HepG2 (cell line): ENCODE measurements at regions of chr3 and their contacts with region 1.

Region 1: DNA sequence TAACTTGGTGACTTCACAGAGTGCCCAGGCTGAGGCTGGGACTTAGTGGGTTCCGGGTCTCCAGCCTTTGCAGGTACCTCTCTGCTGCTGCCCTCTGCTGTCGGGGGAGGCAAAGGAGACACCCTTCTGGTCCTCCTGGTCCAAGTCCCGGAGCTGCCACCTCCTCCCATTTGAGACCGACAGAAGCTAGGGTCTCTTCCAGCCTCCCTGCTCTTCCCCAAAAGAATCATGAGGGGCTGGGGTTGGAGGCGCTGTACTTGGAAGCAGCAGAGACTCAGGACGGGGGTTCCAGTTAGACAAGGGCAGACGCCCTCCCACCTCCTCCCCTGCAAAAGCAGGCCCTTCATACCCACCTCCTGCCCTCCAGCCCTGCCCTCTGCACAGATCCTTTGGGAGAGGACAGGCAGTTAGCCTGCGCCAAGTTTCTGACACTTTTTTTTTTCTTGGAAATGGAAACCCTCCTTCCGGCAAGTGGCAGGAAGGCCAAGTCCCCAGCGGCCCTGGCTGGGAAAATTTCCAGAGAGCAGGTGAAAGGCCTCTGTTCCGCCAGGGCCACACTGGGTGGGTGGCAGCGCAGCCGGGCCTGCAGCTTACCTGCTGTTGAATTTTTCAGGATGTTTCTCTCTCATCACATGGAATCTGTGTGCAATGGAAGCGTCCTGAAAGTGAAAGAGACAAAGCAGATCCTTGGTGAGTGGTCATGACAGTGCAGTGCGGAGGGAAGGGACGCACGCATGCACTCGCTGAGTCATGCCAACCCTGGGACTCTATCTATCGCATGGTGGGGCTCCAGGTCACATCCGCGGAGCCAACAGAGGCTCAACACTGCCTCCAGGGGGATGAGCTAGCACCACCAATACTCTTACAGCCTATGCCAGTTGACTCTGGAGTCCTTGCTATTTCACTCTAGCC is 119.9 kb downstream of the DGKG start:
- DNase-seq: peak; percentile 92
- ATAC-seq: peak; percentile 99
- H3K4me3 ChIP-seq: peak overlapping the region; percentile 66 to 78 (median 75)
- H3K27ac ChIP-seq: peak overlapping the region; percentile 64
- H3K4me1 ChIP-seq: peaks cover 19% of the 10 kb centered on the region
- H3K27me3 ChIP-seq: no peaks in the 10 kb centered on the region
- CTCF ChIP-seq: peak; percentile 94
- EP300 ChIP-seq: no peak
- POLR2A ChIP-seq: peak; percentile 48 to 76; a peak in 3 of 4 replicates
- RAD21 ChIP-seq: peak; percentile 87

Region 2: DNA sequence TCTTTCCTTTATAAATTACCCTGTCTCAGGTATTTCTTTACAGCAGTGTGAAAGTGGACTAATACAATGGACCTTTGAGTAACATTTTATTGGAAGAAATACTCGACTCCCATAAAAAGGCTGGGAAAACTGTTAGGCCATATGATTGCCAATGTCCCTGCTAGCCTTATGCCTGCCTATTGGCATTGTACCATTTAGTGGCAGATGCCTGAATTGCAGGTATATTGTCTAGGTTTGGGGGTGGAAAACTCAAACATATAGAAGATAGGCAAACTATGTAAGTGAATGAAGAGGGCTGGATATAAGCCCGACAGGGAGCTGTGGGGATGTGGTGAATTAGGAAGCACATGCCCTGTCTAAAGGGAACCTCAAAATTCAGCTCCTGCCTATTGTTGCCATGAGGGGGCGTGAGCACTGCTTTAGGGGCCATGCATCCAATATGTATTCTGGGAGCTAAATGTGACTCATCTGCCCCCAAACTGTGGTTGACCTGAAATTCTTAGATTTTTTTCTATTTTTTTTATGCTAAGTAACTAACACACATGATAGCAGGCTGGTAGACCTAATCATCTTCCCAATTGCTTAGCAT is 239.2 kb before region 1 on chr3:
- CTCF ChIA-PET with region 1: interaction called, 11 read pairs
- POLR2A ChIA-PET with region 1: no interaction called
- in situ Hi-C with region 1: no loop called
- intact Hi-C with region 1: loop called (anchors 1 kb)
- DNase-seq: peak; percentile 35
- ATAC-seq: peak; percentile 83
- H3K4me3 ChIP-seq: no peak overlapping the region
- H3K27ac ChIP-seq: no peak overlapping the region
- H3K4me1 ChIP-seq: no peaks in the 10 kb centered on the region
- H3K27me3 ChIP-seq: no peaks in the 10 kb centered on the region
- CTCF ChIP-seq: peak; percentile 68
- EP300 ChIP-seq: no peak
- POLR2A ChIP-seq: no peak
- RAD21 ChIP-seq: 0 out of 2 replicates have a peak, but pooled peaks have one; percentile 24

Region 3: GRCh38 chr3:186097663-186098451 is 144.3 kb before region 1 on chr3:
- CTCF ChIA-PET with region 1: interaction called, 4 read pairs
- POLR2A ChIA-PET with region 1: interaction called, 4 read pairs
- in situ Hi-C with region 1: no loop called
- intact Hi-C with region 1: loop called (anchors 1 kb)
- DNase-seq: peak; percentile 99
- ATAC-seq: peak; percentile 90
- H3K4me3 ChIP-seq: peak overlapping the region; percentile 44 to 69 (median 58)
- H3K27ac ChIP-seq: peak overlapping the region; percentile 85
- H3K4me1 ChIP-seq: peaks cover 88% of the 10 kb centered on the region
- H3K27me3 ChIP-seq: no peaks in the 10 kb centered on the region
- CTCF ChIP-seq: no peak
- EP300 ChIP-seq: peak; percentile 30 to 80; a peak in 2 of 4 replicates
- POLR2A ChIP-seq: peak; percentile 78 to 83
- RAD21 ChIP-seq: 0 out of 2 replicates have a peak, but pooled peaks have one; percentile 13

Region 4: DNA sequence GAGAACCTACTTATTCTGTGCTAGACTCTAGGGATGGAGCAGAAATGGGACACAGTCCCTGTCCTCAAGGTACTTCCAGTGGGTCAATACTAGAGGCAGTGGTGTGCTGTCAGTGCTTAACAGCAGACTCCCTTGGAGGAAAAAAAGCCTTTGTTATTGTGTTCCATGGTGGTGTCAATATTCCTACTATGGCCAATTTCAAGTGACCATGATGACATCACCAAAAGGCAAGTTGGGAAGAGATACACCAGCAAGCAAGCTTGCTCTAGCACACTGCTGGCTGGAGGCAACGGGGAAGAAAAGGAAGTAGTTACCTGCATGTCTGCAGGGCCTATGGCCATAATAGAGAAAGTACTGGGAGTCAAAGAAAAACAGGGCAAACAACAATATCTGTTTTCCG is 43.7 kb before region 1 on chr3:
- CTCF ChIA-PET with region 1: no interaction called
- POLR2A ChIA-PET with region 1: no interaction called
- in situ Hi-C with region 1: no loop called
- intact Hi-C with region 1: no loop called
- DNase-seq: no peak
- ATAC-seq: no peak
- H3K4me3 ChIP-seq: no peak overlapping the region
- H3K27ac ChIP-seq: no peak overlapping the region
- H3K4me1 ChIP-seq: no peaks in the 10 kb centered on the region
- H3K27me3 ChIP-seq: no peaks in the 10 kb centered on the region
- CTCF ChIP-seq: no peak
- EP300 ChIP-seq: no peak
- POLR2A ChIP-seq: no peak
- RAD21 ChIP-seq: no peak

Region 5: GRCh38 chr3:186209810-186210752 is 32.1 kb before region 1 on chr3:
- CTCF ChIA-PET with region 1: interaction called, 3 read pairs
- POLR2A ChIA-PET with region 1: interaction called, 4 read pairs
- in situ Hi-C with region 1: no loop called
- intact Hi-C with region 1: loop called (anchors 2 kb)
- DNase-seq: peak; percentile 84
- ATAC-seq: peak; percentile 92
- H3K4me3 ChIP-seq: peak overlapping the region; percentile 25 to 63 (median 46); a peak in 4 of 6 replicates
- H3K27ac ChIP-seq: peak overlapping the region; percentile 80
- H3K4me1 ChIP-seq: peaks cover 24% of the 10 kb centered on the region
- H3K27me3 ChIP-seq: no peaks in the 10 kb centered on the region
- CTCF ChIP-seq: no peak
- EP300 ChIP-seq: no peak
- POLR2A ChIP-seq: peak in 1 of 2 experiments; percentile 33; a peak in 1 of 4 replicates
- RAD21 ChIP-seq: no peak; the same call in 1 of the 2 replicates